MCF 10A (cell line): ENCODE measurements at regions of chr16 and their contacts with region 1.

Region 1: GRCh38 chr16:29973384-29974246 is at the start of gene TAOK2:
- DNase-seq: peak; percentile 97
- H3K4me3 Mint-ChIP-seq: peak within 1 kb of the TSS; percentile 96
- H3K27ac Mint-ChIP-seq: peak within 1 kb of the TSS; percentile 98
- H3K4me1 Mint-ChIP-seq: peaks cover 27% of the 10 kb centered on the region
- H3K27me3 Mint-ChIP-seq: no peaks in the 10 kb centered on the region
- CTCF ChIP-seq: no peak
- total RNA-seq, gene TAOK2: 29.3 and 33.1 TPM in 2 replicates

Region 2: DNA sequence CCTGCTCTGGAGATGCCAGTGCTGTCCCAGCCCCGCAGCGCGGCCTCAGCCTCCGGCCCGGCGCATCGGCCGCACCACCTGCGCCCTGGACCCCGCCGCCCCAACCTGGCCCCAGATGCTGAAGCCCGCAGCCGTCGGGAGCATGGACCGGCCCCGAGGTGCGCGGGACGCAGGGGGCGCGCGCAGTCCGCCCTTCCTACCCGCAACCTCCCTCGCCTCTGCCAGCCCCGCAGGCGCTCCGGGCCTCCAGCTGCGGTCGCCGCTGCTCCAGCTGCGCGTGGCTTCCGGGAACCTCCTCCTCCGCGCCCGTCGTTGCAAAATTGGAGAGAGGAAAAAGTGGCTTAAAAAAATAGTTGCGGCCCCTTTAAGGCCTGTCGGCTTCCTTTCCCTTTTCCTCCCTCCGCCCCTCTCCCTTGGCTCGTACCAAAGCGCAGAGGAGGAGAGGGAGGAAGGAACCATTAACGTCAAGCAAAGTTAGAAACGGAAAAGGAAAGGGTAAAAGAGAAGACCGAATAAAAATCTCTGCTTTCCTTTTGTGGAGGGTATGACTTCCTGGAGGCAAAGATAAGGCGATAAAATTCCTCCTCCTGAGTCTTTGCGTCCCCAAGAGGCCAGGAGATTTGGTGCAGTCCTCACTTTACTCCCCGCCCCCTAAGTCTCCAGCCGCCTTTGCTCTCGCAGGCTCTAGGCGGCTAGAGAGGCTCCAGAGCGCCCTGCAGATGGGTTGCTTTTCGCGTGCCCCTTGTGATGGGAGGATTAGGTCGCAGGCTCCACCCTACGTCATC is 110.5 kb before region 1 on chr16 and contains the start of gene CDIPT:
- CTCF ChIA-PET with region 1: no interaction called
- POLR2A ChIA-PET with region 1: interaction called, 8 read pairs
- intact Hi-C with region 1: loop called (anchors 2 kb)
- DNase-seq: peak; percentile 96
- H3K4me3 Mint-ChIP-seq: peak within 1 kb of the TSS; percentile 99
- H3K27ac Mint-ChIP-seq: peak within 1 kb of the TSS; percentile 99
- H3K4me1 Mint-ChIP-seq: peaks cover 14% of the 10 kb centered on the region
- H3K27me3 Mint-ChIP-seq: no peaks in the 10 kb centered on the region
- CTCF ChIP-seq: no peak
- total RNA-seq, gene CDIPT: 41.3 and 42.7 TPM in 2 replicates

Region 3: GRCh38 chr16:29926005-29926710 is 47.5 kb before region 1 on chr16 and contains the start of gene KCTD13:
- CTCF ChIA-PET with region 1: interaction called, 5 read pairs
- POLR2A ChIA-PET with region 1: interaction called, 56 read pairs
- intact Hi-C with region 1: loop called (anchors 2 kb)
- DNase-seq: peak; percentile 82
- H3K4me3 Mint-ChIP-seq: peak within 1 kb of the TSS; percentile 96
- H3K27ac Mint-ChIP-seq: peak within 1 kb of the TSS; percentile 91
- H3K4me1 Mint-ChIP-seq: peaks cover 27% of the 10 kb centered on the region
- H3K27me3 Mint-ChIP-seq: no peaks in the 10 kb centered on the region
- CTCF ChIP-seq: no peak
- total RNA-seq, gene KCTD13: 35.5 and 38.9 TPM in 2 replicates

Region 4: GRCh38 chr16:29961479-29962343 is 11.9 kb before region 1 on chr16 and contains the start of gene TMEM219:
- CTCF ChIA-PET with region 1: interaction called, 7 read pairs
- POLR2A ChIA-PET with region 1: interaction called, 75 read pairs
- intact Hi-C with region 1: no loop called
- DNase-seq: peak; percentile 77
- H3K4me3 Mint-ChIP-seq: peak within 1 kb of the TSS; percentile 89
- H3K27ac Mint-ChIP-seq: peak within 1 kb of the TSS; percentile 77
- H3K4me1 Mint-ChIP-seq: peaks cover 16% of the 10 kb centered on the region
- H3K27me3 Mint-ChIP-seq: no peaks in the 10 kb centered on the region
- CTCF ChIP-seq: peak; percentile 14
- total RNA-seq, gene TMEM219: 62.1 and 68.1 TPM in 2 replicates

Region 5: GRCh38 chr16:30079480-30079879 is 105.9 kb after region 1 on chr16:
- CTCF ChIA-PET with region 1: no interaction called
- POLR2A ChIA-PET with region 1: no interaction called
- intact Hi-C with region 1: no loop called
- DNase-seq: no peak
- H3K4me3 Mint-ChIP-seq: no peak overlapping the region
- H3K27ac Mint-ChIP-seq: no peak overlapping the region
- H3K4me1 Mint-ChIP-seq: peaks cover 20% of the 10 kb centered on the region
- H3K27me3 Mint-ChIP-seq: no peaks in the 10 kb centered on the region
- CTCF ChIP-seq: no peak